BJ (cell line): ENCODE measurements at regions of chr7 and their contacts with region 1.

Region 1: DNA sequence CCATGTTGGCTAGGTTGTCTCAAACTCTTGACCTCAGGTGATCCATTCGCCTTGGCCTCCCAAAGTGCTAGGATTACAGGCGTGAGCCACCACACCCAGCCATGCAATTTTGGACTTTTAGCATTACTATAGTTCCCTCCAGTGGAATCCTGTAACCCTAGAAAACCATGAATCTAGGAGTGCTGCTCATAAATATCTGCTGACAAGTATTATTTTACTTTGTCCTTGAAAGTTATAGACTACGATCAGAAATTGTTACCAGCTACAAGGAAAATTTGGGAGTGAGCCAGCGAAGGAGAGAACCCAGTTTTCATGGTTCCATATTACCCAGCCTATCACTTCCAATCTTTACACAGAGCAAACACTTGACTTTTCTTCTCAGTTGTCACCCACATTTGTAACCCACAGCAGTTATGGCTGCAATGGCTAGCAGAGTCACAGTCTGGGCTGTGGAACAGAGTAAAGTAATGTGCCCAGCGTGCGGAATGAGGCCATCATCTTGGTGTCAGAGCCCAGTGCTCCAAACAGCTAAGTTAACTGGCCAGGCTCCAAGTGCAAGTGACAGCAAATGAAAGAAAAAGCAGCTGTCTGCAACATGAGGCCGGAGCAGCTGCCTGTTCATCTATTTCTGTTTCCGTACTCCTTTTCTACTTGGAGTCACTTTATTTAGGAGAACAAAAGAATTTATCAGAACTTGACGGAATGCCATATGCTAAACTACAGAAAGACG is 29.9 kb downstream of the ZC3HC1 start:
- DNase-seq: no peak
- H3K4me3 ChIP-seq: no peak overlapping the region
- H3K27me3 ChIP-seq: no peaks in the 10 kb centered on the region
- CTCF ChIP-seq: no peak

Region 2: GRCh38 chr7:130037703-130038102 is 16.4 kb after region 1 on chr7:
- CTCF ChIA-PET with region 1: no interaction called
- POLR2A ChIA-PET with region 1: no interaction called
- DNase-seq: no peak
- H3K4me3 ChIP-seq: no peak overlapping the region
- H3K27me3 ChIP-seq: no peaks in the 10 kb centered on the region
- CTCF ChIP-seq: peak; percentile 48

Region 3: GRCh38 chr7:130814778-130815335 is 793.6 kb after region 1 on chr7:
- CTCF ChIA-PET with region 1: no interaction called
- POLR2A ChIA-PET with region 1: interaction called, 13 read pairs
- DNase-seq: no peak
- H3K4me3 ChIP-seq: no peak overlapping the region
- H3K27me3 ChIP-seq: no peaks in the 10 kb centered on the region
- CTCF ChIP-seq: peak; percentile 61